Natural killer cell (primary cell): ENCODE measurements at regions of chr19 and their contacts with region 1.

Region 1: DNA sequence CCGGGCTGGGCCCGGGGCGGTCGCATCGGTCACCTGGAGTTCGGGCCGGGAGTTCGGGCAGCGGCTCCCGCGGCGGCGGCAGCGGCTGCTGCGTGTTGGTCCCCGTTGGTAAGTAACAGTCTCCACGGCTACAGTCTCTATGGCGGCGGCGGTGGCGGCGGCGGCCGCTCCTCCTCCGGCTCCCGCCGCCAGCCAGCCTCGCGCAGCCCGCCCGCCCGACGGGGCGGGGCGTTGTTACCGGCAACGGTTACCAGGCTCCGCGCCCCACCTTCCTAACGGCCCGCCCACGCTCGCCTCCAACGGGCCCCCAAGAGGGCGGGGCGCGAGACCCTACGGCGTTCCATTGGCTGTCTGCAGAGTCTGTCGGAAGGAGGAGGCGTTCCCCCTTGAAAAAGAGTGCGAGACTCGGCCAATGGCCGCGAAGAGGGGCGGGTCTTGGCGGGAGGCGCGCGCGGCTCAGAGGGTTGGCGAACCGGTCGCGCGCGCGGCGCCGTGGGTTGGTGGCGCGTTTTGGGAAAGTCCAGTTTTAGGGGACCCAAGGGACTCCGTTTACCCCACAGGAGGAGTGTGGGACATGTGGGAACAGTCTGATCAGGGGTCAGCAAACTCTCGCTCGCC is at the start of gene RFX2:
- DNase-seq: peak; percentile 98 to 99
- ATAC-seq: peak; percentile 96 to 100 (median 97)
- H3K4me3 ChIP-seq: peak within 1 kb of the TSS; percentile 44
- H3K4me3 Mint-ChIP-seq: peak within 1 kb of the TSS; percentile 98
- H3K27ac ChIP-seq: peak within 1 kb of the TSS; percentile 1
- H3K27ac Mint-ChIP-seq: peak within 1 kb of the TSS; percentile 88 to 97
- H3K4me1 ChIP-seq: peaks cover 23% of the 10 kb centered on the region
- H3K4me1 Mint-ChIP-seq: peaks cover 19 to 26% of the 10 kb centered on the region in 2 donors
- H3K27me3 ChIP-seq: peaks cover 10% of the 10 kb centered on the region
- H3K27me3 Mint-ChIP-seq: peaks cover 22 to 31% of the 10 kb centered on the region in 2 donors
- CTCF ChIP-seq: no peak
- total RNA-seq, gene RFX2: 2.4 to 4.6 (median 4.1) TPM

Region 2: GRCh38 chr19:6066661-6067646 is 43.5 kb before region 1 on chr19:
- intact Hi-C with region 1: loop called (anchors 5 kb)
- DNase-seq: peak; percentile 14 to 69
- ATAC-seq: no peak
- H3K4me3 ChIP-seq: no peak overlapping the region
- H3K4me3 Mint-ChIP-seq: peak overlapping the region; percentile 2
- H3K27ac ChIP-seq: peak overlapping the region; percentile 73
- H3K27ac Mint-ChIP-seq: peak overlapping the region; percentile 76 to 82
- H3K4me1 ChIP-seq: peaks cover 26% of the 10 kb centered on the region
- H3K4me1 Mint-ChIP-seq: peaks cover 36 to 46% of the 10 kb centered on the region in 2 donors
- H3K27me3 ChIP-seq: no peaks in the 10 kb centered on the region
- H3K27me3 Mint-ChIP-seq: peaks cover 15 to 29% of the 10 kb centered on the region in 2 donors
- CTCF ChIP-seq: no peak

Region 3: DNA sequence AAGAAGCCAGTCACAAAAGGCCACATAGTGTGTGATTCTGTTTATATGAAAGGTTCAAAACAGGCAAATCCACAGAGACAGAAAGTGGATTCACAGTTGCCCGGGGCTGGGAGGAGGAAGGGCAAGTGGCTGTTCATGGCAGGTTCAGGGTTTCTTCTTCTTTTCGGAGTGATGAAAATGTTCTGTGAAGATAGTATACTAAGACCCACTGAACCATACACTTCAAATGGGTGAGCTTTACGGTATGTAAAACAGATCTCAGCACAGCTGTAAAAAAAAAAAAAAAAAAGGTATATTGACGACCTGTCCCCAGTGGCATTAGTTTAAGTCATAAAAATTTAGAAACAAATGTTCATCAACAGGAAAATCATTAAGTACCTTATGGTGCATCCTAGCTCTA is 32.4 kb before region 1 on chr19:
- intact Hi-C with region 1: no loop called
- DNase-seq: no peak
- ATAC-seq: no peak
- H3K4me3 ChIP-seq: no peak overlapping the region
- H3K4me3 Mint-ChIP-seq: no peak overlapping the region
- H3K27ac ChIP-seq: no peak overlapping the region
- H3K27ac Mint-ChIP-seq: no peak overlapping the region
- H3K4me1 ChIP-seq: no peaks in the 10 kb centered on the region
- H3K4me1 Mint-ChIP-seq: no peaks in the 10 kb centered on the region
- H3K27me3 ChIP-seq: no peaks in the 10 kb centered on the region
- H3K27me3 Mint-ChIP-seq: peaks cover 2 to 9% of the 10 kb centered on the region in 2 donors
- CTCF ChIP-seq: no peak

Region 4: GRCh38 chr19:6199240-6199983 is 88.9 kb after region 1 on chr19:
- intact Hi-C with region 1: loop called (anchors 2 kb)
- DNase-seq: peak; percentile 99 to 100
- ATAC-seq: peak; percentile 93 to 95 (median 94)
- H3K4me3 ChIP-seq: peak overlapping the region; percentile 84
- H3K4me3 Mint-ChIP-seq: peak overlapping the region; percentile 98
- H3K27ac ChIP-seq: peak overlapping the region; percentile 66
- H3K27ac Mint-ChIP-seq: peak overlapping the region; percentile 93 to 98
- H3K4me1 ChIP-seq: peaks cover 16% of the 10 kb centered on the region
- H3K4me1 Mint-ChIP-seq: peaks cover 10 to 20% of the 10 kb centered on the region in 2 donors
- H3K27me3 ChIP-seq: no peaks in the 10 kb centered on the region
- H3K27me3 Mint-ChIP-seq: peaks cover 0 to 4% of the 10 kb centered on the region in 2 donors
- CTCF ChIP-seq: peak; percentile 56